Right ventricle myocardium superior (tissue), 1 donor: ENCODE measurements at regions of chr2 and their contacts with region 1.

Region 1: DNA sequence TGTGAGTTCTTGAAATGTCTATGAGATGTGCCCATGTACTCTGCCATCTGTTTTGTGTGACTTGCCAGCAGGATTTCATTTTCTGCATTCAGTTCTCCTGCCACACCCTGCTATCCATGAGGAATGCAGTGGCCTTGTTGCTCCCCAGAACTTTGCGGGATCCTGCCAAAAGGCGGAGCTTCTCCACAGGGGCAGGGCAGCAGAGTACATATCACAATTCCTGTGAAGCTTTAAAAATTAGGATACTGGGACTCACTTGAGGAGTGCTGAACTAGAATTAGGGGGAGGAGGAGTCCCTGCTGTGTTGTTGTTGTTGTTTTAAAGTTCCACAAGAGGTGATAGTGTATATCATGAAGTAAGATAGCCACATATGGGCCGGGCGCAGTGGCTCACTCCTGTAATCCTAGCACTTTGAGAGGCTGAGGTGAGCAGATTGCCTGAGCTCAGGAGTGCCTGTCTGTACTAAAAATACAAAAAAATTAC is 76.4 kb downstream of the TANC1 start:
- DNase-seq: peak; percentile 47
- ATAC-seq: peak; percentile 54

Region 2: DNA sequence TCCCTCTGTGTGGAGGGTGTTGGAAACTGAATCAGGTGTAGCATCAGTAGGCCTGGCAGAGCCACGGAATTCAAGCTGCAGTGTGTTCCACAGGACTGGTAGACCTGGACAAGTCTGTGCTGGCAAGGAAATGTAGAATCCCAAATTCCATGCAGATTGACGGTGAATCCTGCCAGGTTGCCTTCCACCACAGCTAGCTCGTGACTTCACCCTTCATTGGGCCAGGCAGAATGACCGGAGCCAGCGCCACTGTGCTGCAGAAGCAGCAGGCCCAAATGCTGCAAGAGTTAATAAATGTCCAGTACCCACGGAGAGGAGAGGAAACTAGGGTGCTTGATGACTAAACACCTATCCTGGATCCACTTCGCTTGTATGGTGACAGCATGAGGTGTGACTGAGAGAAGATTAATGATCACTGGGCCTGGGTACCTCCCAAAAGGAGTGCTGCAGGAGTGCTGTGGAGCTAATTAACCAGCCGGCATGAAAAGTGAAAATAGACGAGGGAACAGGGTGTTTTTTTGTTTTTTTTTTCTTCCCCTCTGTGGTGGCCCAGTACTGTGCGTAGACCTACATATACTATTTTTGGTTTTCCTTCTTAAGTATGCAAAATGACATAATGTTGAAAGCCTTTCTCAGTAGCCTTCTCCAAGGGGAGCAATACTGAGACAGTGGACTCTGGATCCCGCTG is 45.8 kb after region 1 on chr2:
- intact Hi-C with region 1: loop called (anchors 10 kb)
- DNase-seq: no peak
- ATAC-seq: peak; percentile 26

Region 3: DNA sequence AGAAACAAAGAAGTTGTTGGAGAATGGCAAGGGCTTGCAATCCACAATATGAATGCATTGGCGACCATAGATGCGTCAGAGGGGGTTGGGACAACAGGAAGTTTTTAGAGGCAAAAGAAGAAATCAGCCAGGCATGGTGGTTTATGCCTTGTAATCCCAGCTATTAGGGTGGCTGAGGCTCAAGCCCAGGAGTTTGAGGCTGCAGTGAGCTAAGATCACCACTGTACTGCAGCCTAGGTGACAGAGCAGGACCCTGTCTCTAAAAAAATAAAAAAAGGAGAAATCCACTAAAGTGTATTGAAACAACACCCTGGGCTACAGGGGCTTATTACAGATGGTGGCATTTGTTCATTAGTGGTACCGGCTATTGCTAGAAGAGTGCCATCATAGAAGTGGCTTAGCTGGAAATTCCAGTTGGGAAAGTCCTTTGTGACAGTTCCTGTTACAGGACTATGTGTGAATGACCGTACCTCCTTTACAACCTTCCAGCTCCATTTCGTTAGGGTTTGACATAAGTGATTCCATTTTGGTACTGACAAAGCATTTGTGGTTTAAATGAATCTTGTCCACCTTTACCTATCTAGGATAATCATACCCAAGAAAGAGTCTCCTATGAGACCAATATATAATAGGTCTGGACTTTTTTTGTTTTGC is 252.3 kb after region 1 on chr2:
- intact Hi-C with region 1: no loop called
- DNase-seq: no peak
- ATAC-seq: no peak